MCF 10A (cell line): ENCODE measurements at regions of chr11 and their contacts with region 1.

Region 1: DNA sequence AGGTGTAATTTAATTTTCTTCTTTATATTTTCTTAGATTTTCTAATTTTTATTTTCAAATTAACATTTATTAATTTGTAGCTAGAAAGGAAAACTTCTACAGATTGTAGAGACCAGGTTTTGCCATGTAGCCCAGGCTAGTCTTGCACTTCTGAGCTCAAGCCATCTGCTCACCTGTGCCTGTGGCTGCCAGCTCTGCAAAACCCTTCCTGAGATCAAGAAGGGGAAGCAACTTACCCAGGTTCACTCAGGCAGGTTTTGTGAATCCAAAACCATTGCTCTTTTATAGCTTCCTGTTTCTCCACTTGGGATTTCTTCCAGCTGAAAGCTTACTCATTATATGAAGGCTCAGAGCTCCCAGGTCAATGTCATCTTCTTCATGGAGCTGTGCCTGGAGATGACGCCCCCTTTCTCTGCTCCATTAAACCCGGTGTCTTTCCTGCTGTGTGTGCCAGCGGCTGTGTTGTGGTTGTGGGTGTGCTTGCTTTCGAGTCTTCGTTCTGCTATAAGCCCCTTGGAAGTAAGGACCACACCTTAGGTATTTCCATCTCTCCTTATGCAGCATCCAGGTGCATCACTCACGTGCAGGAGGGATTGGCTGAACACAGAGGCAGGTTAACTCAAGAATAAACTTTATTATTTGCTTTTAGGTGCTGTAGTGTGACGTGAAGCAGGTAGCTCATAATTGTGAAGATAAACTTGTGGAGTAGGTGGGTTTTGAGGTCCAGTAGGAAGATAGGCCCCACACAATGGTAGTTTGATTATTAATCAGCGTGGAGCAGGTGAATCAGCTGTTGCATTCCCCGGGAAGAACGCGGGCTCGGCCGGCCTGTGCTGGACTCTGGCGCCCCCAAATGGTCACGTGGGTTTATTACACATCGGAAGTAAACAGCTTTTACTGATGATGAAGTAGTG is 42.2 kb upstream of the INCENP start:
- DNase-seq: peak; percentile 66
- H3K4me3 Mint-ChIP-seq: no peak overlapping the region
- H3K27ac Mint-ChIP-seq: no peak overlapping the region
- H3K4me1 Mint-ChIP-seq: peaks cover 7% of the 10 kb centered on the region
- H3K27me3 Mint-ChIP-seq: no peaks in the 10 kb centered on the region
- CTCF ChIP-seq: peak; percentile 87

Region 2: GRCh38 chr11:61871158-61871597 is 210.5 kb before region 1 on chr11:
- CTCF ChIA-PET with region 1: interaction called, 24 read pairs
- POLR2A ChIA-PET with region 1: no interaction called
- intact Hi-C with region 1: loop called (anchors 1 kb)
- DNase-seq: peak; percentile 78
- H3K4me3 Mint-ChIP-seq: no peak overlapping the region
- H3K27ac Mint-ChIP-seq: no peak overlapping the region
- H3K4me1 Mint-ChIP-seq: peaks cover 18% of the 10 kb centered on the region
- H3K27me3 Mint-ChIP-seq: no peaks in the 10 kb centered on the region
- CTCF ChIP-seq: peak; percentile 97

Region 3: DNA sequence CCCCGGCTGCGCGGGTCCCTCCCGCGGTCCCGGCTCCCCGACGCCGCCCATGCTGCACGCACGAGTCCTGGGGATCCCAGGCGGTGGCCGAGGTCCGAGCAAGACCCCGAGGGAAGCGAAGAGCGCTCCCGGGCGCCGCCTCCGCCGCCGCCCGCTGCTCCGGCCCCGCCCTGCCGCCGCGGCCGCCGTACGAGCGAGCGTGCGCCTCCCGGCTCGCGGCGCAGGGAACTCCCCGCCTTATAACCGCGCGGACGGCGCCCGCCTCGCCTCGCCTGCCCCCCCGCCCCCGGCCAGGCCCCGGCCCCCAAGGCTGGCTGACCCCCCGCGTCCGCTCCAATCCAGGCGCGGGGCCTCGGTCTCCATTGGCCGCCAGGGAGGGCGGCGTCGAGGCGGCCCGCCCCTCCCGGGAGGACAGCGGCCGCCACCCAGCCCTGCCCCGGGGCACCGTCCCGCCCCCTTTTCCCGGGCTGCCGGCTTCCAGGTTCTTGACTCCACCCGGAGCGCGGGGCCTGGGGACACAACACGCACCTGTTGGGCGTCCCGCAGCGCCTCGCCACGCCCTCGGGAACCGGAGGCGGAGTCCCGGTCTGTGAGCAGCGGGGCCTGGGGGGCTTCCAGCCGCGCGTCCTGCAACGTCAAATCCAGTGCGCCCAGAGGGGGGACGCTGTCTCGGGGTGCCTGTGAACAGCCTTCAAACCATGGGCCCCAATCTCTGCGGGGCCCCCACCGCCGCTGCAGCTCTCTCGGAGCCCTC is 190.1 kb before region 1 on chr11 and contains the start of gene FADS3:
- CTCF ChIA-PET with region 1: interaction called, 161 read pairs
- POLR2A ChIA-PET with region 1: interaction called, 3 read pairs
- intact Hi-C with region 1: no loop called
- DNase-seq: peak; percentile 77
- H3K4me3 Mint-ChIP-seq: peak within 1 kb of the TSS; percentile 83
- H3K27ac Mint-ChIP-seq: peak within 1 kb of the TSS; percentile 61
- H3K4me1 Mint-ChIP-seq: peaks cover 23% of the 10 kb centered on the region
- H3K27me3 Mint-ChIP-seq: no peaks in the 10 kb centered on the region
- CTCF ChIP-seq: no peak
- total RNA-seq, gene FADS3: 145 and 184 TPM in 2 replicates

Region 4: DNA sequence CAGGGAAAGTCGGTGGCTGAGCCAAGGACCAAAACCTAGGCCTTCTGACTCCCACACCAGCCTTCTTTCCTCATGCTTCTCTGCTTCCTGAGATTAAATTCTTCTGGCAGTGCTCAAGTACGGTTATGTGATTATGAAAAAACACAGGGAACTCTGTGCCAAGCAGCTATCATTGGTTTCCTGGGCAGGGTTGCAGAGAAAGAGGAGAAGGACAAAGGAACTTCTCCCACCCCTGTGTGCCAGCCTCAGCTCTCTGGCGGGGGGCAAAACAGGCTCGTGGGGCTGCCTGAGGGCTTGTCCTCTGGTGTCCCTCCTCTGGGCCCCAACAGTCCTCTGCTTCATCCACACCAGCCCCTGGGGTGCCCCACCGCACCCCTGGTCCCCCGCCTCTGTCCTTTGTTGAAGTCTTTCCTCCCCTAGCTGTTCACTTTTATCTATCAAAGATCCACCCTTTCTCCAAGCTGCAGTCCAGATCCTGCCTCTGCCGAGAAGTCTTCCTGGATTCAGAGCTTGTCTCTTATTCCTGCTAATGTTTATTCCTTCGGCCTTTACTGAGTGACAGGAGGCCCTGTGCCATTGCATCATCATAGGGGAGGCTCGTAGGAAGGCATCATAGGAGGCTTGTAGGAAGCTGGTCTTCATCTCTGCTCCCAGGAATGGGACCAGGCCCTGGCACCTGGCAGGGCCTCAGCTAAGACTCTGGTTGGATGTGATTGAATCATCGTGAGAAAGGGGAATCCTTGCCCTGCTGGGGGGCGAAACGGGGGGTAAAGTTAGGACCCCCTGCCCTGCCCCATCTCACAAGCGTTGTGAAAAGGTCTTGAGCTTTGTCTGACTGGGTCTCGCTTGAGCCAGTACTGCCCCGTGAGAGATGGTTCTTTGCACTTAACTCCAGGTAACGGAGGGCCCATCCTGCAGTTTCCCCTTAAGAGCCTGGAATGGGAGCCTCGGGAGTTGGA is 102.7 kb before region 1 on chr11:
- CTCF ChIA-PET with region 1: interaction called, 10 read pairs
- POLR2A ChIA-PET with region 1: no interaction called
- intact Hi-C with region 1: no loop called
- DNase-seq: peak; percentile 59
- H3K4me3 Mint-ChIP-seq: no peak overlapping the region
- H3K27ac Mint-ChIP-seq: peak overlapping the region; percentile 84
- H3K4me1 Mint-ChIP-seq: peaks cover 33% of the 10 kb centered on the region
- H3K27me3 Mint-ChIP-seq: no peaks in the 10 kb centered on the region
- CTCF ChIP-seq: no peak

Region 5: DNA sequence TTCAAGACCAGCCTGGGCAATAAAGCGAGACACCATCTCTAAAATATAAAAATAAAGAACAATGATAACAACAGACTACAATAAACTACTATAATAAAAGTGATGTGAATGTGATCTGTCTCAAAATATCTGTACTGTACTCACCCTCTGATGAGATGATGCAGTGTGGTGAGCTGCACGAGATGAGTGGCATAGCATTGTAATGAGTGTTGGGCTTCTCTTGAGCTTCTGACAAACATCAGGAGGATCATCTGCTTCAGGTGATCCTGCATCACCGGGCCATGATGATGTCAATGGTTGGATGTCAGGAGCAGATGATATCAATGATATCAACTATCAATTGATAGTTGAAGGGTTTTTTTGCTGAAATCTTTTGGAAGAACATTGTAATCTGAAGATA is 10.2 kb before region 1 on chr11:
- CTCF ChIA-PET with region 1: interaction called, 29 read pairs
- POLR2A ChIA-PET with region 1: interaction called, 5 read pairs
- intact Hi-C with region 1: no loop called
- DNase-seq: no peak
- H3K4me3 Mint-ChIP-seq: no peak overlapping the region
- H3K27ac Mint-ChIP-seq: no peak overlapping the region
- H3K4me1 Mint-ChIP-seq: no peaks in the 10 kb centered on the region
- H3K27me3 Mint-ChIP-seq: no peaks in the 10 kb centered on the region
- CTCF ChIP-seq: no peak